ENCODE measurements at regions of chr6 and their contacts with region 1.

Region 1: GRCh38 chr6:28683944-28684538 is 158.4 kb downstream of the GPX5 start:
- DNase-seq: peak in 3 of 5 donors; percentile 19 to 55 (median 45)
- H3K4me3 ChIP-seq: no peak overlapping the region
- H3K27ac ChIP-seq: no peak overlapping the region
- H3K4me1 ChIP-seq: no peaks in the 10 kb centered on the region
- H3K27me3 ChIP-seq: peaks cover 11% of the 10 kb centered on the region
- CTCF ChIP-seq: peak; percentile 57

Region 2: DNA sequence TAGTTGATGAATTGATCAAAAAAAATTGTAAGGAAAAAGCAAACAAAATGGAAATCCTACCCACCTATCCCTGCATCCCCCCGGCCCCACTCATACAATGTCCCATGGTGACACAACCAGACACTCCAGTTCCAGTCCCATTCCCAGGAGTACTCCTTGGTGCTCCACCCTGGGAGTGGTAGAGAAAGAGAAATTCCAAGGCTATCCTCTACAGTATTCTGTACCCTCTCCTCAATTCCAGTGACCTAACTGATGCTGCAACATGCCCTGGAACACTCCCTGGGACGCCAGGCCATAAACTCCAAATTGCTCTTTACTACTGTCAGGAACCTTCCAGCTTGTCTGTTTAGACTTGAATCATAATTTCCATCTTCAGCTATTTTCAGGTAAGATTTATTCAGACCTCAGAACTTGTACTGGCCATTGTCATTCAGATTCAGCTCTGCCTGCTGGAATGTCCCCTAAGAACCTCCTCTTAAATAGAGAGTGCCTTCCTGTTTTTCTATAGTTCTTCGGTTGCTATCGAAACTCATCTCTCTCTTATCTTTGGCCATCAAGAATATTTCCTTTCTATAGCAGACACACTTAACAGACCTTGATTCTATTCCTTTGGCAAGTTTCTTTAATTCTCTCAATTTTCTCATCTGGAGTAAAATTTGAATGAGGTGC is 177.1 kb before region 1 on chr6:
- intact Hi-C with region 1: no loop called
- DNase-seq: no peak
- H3K4me3 ChIP-seq: no peak overlapping the region
- H3K27ac ChIP-seq: no peak overlapping the region
- H3K4me1 ChIP-seq: no peaks in the 10 kb centered on the region
- H3K27me3 ChIP-seq: no peaks in the 10 kb centered on the region
- CTCF ChIP-seq: no peak

Region 3: GRCh38 chr6:28565823-28566526 is 118.1 kb before region 1 on chr6:
- intact Hi-C with region 1: no loop called
- DNase-seq: peak in 1 of 5 donors; percentile 21
- H3K4me3 ChIP-seq: no peak overlapping the region
- H3K27ac ChIP-seq: no peak overlapping the region
- H3K4me1 ChIP-seq: no peaks in the 10 kb centered on the region
- H3K27me3 ChIP-seq: no peaks in the 10 kb centered on the region
- CTCF ChIP-seq: no peak

Region 4: DNA sequence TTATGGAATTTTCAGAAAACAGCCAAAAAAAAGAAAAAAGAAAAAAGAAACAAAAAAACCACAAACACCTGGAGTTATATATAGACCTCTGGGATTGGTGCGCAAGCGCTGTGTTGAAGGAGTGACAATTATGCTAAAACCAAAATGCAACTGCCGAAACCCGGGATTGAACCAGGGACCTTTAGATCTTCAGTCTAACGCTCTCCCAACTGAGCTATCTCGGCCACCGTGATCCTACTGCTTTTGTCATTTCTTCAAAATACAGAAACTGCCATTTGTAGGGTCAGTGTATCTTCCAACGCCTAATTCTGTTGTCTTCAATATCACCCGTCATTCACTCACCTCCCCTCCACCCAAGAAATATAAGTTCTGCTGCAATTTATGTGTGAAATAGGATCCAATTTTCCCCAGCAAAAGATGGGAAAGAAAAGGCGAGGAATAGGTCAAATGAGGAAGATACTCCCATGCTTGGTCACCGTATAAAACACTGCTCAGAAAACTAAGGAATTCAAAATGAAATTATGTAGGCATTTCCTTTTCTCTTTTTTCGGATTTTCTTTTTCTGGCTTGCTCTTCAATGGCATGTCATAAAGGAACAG is 123.7 kb after region 1 on chr6:
- intact Hi-C with region 1: no loop called
- DNase-seq: peak in 1 of 5 donors; percentile 43
- H3K4me3 ChIP-seq: no peak overlapping the region
- H3K27ac ChIP-seq: no peak overlapping the region
- H3K4me1 ChIP-seq: no peaks in the 10 kb centered on the region
- H3K27me3 ChIP-seq: peaks cover 68% of the 10 kb centered on the region
- CTCF ChIP-seq: no peak

Region 5: DNA sequence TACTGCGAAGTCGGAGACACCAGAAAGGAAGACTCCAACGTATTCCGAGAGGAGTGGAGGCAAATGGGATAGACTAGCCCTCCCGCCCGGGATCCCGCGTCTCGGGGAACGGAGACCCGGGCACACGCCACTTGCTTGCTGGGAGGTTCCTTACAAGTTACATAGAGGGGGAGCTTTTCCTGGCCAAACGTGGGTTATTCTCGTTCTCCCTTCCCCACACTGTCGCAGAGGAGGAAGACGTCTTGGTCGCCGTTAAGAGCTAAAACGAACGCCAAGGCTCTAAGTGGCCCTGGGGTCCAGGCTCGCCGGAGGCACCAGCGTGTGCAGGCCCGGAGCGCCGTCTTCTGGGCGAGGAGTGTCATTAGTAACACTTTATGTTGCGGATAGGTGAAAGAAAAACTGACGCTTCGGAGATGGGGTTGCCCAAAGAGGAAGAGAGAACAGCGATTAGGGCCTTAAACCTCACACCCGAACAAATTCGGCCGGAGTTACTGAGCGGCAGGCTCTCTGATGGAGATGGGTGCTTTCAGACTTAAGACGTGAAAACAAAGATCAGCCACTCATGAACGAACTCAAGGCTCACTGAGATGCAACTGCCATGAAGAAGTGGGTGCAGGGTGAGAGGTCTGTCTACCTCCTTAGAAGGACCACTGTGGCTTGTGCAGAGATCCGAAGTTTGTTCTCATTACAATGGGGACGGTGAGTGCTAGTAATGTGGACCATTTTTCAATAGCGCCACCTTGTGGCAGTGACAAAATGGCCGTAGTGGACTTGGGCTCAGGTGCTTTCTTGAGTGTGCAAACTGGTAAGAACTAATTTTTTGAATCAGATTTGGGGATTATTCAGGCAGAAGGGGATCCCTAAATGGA is 332.8 kb after region 1 on chr6:
- intact Hi-C with region 1: loop called (anchors 10 kb)
- DNase-seq: peak; percentile 87 to 93 (median 89)
- H3K4me3 ChIP-seq: peak overlapping the region; percentile 76 to 83 (median 80)
- H3K27ac ChIP-seq: no peak overlapping the region
- H3K4me1 ChIP-seq: peaks cover 0 to 9% (median 0%) of the 10 kb centered on the region in 3 donors
- H3K27me3 ChIP-seq: peaks cover 26% of the 10 kb centered on the region
- CTCF ChIP-seq: peak; percentile 80

Measured in kidney (tissue), 22 donors.